ENCODE measurements at regions of chr6 and their contacts with region 1.

Region 1: DNA sequence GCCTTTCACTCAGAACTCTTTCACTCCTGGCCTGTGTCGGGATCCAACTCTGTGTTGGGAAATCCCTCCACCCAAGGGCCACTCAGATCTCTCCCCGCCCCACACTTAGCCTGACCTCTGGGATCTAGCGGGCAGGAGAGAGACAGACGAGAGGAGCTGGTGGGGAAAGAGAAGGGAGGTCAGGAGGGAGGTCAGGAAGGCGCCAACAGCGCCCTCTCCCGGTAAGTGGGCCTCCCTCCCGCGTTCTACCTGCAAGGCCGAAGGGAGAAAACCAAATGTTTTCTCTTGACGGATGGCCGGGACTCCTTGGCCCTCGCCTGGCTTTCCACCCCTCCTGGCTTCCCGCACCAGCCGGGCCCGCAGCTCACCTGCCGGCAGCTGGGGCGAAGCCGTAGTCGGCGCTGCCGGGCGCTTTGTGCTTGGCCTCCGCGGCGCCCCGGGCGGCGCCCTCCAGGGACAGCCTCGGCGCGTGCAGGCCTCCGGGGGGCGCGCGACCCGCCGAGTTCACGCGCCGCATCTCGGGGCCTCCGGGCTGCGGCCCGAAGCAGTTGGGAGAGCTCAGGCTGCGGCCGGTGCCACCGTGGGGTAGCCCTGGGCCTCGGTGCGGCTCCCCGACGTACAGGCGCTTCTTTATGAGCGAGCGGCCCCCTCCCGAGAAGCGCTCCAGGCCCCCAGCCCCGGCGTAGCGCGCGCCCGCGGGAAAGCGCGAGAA is 38.2 kb downstream of the C6orf132 start:
- DNase-seq: peak; percentile 87
- H3K4me3 Mint-ChIP-seq: peak overlapping the region; percentile 65
- H3K27ac Mint-ChIP-seq: no peak overlapping the region
- H3K4me1 Mint-ChIP-seq: peaks cover 21% of the 10 kb centered on the region
- H3K27me3 Mint-ChIP-seq: no peaks in the 10 kb centered on the region

Region 2: DNA sequence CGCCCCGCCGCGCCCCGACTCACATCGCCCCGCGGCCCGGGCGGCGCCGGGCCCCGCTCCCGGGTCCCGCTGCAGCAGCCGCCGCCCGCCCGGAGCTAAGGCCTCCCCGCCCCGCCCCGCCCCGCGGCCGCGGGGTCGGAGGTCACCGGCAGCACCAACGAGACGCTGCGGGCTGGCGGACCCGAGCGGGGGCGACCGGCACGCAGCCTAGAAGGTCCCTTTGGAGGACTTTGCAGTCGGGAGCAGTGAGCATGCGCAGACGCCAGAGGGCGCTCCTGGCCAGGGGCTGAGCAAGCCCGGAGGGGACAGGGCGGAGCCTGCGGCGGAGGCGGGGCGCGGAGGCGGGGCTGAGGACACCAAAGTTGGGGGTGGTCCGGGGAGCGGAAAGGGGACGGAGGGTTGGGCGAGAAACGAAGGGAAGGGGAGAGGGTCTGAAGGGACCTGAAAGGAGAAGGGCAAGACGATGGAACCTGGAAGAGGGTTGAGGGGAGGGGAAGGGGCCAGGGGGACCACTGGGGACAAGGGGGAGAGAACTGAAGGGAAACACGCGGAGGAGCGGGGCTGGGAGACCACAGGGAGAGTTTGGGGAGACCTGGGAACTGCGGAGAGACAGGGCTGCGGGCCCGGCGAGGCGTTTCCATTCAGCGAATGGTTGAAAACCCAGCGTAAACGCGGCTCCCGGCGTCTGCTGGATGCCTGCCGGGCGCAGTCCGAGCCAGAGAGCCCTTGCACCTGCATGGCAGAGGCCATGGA is 324.3 kb before region 1 on chr6 and contains the start of gene FRS3:
- CTCF ChIA-PET with region 1: interaction called, 6 read pairs
- intact Hi-C with region 1: loop called (anchors 1 kb)
- DNase-seq: peak; percentile 99
- H3K4me3 Mint-ChIP-seq: peak within 1 kb of the TSS; percentile 82
- H3K27ac Mint-ChIP-seq: no peak within 1 kb of the TSS
- H3K4me1 Mint-ChIP-seq: peaks cover 11% of the 10 kb centered on the region
- H3K27me3 Mint-ChIP-seq: peaks cover 4% of the 10 kb centered on the region
- total RNA-seq, gene FRS3: 4.0 to 4.2 TPM

Region 3: DNA sequence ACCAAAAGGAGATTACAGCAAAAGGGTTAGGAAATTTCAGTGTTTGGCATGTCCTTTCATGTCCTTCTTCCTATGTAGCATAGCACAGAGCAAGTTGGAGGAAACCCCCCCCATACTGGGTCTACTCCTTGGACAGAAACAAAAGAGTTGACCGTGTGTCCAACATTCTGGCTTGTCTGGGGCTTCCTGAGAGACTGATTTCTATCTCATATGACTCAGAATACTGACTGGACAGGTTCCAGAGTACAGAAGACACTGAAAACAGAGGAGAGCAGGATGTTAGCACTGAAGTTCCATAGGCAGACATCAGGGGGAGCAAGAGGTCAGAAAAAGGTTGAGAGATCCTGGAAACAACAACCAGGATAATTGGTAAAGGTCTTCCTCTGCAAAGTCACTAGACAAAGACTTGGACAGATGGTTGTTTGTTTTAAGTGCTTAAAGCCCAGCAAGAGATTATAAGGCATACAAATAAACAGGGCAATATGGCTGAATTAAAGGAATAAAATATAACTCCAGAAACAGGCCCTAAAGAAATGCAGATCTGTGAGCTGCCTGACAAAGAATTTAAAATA is 257.5 kb before region 1 on chr6:
- CTCF ChIA-PET with region 1: interaction called, 7 read pairs
- intact Hi-C with region 1: loop called (anchors 1 kb)
- DNase-seq: peak; percentile 81
- H3K4me3 Mint-ChIP-seq: no peak overlapping the region
- H3K27ac Mint-ChIP-seq: no peak overlapping the region
- H3K4me1 Mint-ChIP-seq: peaks cover 5% of the 10 kb centered on the region
- H3K27me3 Mint-ChIP-seq: no peaks in the 10 kb centered on the region

Region 4: DNA sequence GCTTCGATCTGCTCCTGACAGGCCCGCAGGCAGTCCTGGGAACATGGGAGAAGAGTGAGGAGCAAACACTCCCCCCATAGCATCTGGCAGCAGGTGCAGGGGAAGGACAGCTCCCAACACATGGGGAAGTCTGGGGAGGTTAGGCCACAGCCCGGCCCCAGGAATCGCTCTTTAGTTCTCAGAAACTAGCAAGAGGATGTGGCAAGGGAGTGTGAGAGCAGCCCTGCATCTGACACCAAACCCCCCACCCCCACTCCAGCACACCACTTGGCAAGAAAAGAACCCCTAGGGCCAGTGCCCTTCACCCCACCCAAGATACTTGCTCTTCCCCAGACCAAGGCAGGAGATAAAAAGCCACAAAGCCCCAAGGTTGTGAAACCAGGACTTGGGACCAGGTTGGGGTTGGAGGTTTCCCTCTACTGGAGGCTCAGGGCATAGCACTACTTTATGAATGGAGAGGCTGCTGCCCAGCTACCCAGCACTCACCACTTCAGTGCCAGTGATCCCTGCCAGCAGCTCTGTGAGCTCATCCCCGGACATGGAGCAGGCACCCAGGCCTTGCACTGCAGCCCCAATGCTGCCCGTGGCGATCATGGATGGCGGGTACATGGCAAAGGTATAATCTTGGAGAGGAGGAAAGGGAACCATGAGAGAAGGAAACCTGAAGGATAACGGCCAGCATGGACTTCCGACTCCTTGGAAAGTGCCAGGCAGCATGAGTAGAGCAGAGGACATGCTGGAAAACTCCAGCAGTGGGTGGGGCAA is 168.0 kb before region 1 on chr6:
- CTCF ChIA-PET with region 1: no interaction called
- intact Hi-C with region 1: no loop called
- DNase-seq: peak; percentile 80
- H3K4me3 Mint-ChIP-seq: peak overlapping the region; percentile 100
- H3K27ac Mint-ChIP-seq: peak overlapping the region; percentile 99
- H3K4me1 Mint-ChIP-seq: peaks cover 38% of the 10 kb centered on the region
- H3K27me3 Mint-ChIP-seq: no peaks in the 10 kb centered on the region

Region 5: GRCh38 chr6:42050266-42051032 is 53.8 kb before region 1 on chr6 and contains the start of gene TAF8:
- CTCF ChIA-PET with region 1: interaction called, 18 read pairs
- intact Hi-C with region 1: loop called (anchors 1 kb)
- DNase-seq: peak; percentile 95
- H3K4me3 Mint-ChIP-seq: peak within 1 kb of the TSS; percentile 83
- H3K27ac Mint-ChIP-seq: peak within 1 kb of the TSS; percentile 88
- H3K4me1 Mint-ChIP-seq: peaks cover 64% of the 10 kb centered on the region
- H3K27me3 Mint-ChIP-seq: no peaks in the 10 kb centered on the region
- total RNA-seq, gene TAF8: 67.3 to 68.5 TPM

Region 6: DNA sequence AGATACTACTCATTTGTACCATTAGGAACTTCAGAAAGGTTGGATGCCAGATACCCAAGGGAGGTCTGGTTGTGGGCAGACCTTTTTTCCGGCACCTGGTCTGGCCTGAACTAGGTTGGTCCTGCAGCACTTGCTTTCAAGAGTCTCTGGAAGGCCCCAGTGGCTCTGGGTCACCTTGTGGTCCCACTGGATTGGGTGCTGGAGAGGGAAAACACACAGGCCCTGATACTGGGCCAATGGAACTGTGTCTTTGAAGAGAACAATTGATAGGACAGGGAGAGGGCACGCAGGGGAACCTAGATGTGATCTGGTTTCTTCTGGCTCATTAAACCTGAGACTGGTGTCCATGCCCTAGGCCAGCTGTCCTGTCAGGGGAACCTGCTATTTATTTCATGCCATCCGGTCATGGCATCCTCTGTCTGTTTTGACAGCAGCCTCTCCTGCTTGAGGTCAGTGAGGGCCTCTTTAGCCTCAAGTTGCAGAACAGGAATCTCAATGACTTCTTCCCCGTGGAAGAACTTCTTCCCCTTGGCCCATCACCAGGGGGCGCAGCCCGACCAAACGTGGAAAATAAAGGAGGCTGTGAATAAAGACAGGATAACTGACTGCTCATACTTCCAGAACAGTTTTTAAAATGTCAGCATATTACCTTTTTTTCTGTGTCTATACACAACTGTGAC is 29.0 kb before region 1 on chr6:
- CTCF ChIA-PET with region 1: interaction called, 15 read pairs
- intact Hi-C with region 1: loop called (anchors 1 kb)
- DNase-seq: peak; percentile 78
- H3K4me3 Mint-ChIP-seq: no peak overlapping the region
- H3K27ac Mint-ChIP-seq: no peak overlapping the region
- H3K4me1 Mint-ChIP-seq: peaks cover 3% of the 10 kb centered on the region
- H3K27me3 Mint-ChIP-seq: no peaks in the 10 kb centered on the region

Region 7: GRCh38 chr6:42084889-42085288 is 19.4 kb before region 1 on chr6:
- CTCF ChIA-PET with region 1: interaction called, 16 read pairs
- intact Hi-C with region 1: no loop called
- DNase-seq: no peak
- H3K4me3 Mint-ChIP-seq: no peak overlapping the region
- H3K27ac Mint-ChIP-seq: no peak overlapping the region
- H3K4me1 Mint-ChIP-seq: no peaks in the 10 kb centered on the region
- H3K27me3 Mint-ChIP-seq: no peaks in the 10 kb centered on the region

Measured in activated naive CD4-positive, alpha-beta T cell treated with anti-CD3 and anti-CD28 coated beads for 36 hours (primary cell).